SK-N-SH (cell line): ENCODE measurements at regions of chr16 and their contacts with region 1.

Region 1: DNA sequence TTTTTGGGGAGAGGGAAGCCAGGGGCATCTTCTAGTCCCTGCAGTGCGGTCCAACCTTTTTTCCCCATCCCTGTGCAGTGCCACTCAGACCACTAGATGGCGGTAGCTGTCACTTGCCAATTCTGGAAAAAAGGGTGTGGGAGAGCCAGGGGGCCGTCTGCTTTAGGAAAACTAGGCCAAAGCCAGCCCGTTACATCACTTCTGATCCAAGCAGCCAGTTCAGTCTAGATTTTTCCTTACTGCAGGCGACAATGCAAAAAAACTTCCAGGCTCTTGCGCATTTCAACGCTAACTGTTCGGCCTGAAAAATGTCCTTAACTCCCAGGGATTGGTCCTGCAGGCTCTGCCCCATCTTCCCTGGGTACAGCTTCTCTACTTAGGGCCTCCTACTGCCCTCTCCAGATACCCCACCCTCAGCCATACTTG is 69.2 kb upstream of the CES5A start:
- DNase-seq: peak; percentile 68
- H3K4me3 ChIP-seq: peak overlapping the region in 1 of 2 experiments; percentile 42; a peak in 1 of 4 replicates
- H3K27ac ChIP-seq: no peak overlapping the region
- H3K4me1 ChIP-seq: no peaks in the 10 kb centered on the region; a peak in 1 of 4 replicates
- H3K27me3 ChIP-seq: no peaks in the 10 kb centered on the region
- CTCF ChIP-seq: peak; percentile 93
- EP300 ChIP-seq: no peak
- RAD21 ChIP-seq: peak; percentile 88

Region 2: DNA sequence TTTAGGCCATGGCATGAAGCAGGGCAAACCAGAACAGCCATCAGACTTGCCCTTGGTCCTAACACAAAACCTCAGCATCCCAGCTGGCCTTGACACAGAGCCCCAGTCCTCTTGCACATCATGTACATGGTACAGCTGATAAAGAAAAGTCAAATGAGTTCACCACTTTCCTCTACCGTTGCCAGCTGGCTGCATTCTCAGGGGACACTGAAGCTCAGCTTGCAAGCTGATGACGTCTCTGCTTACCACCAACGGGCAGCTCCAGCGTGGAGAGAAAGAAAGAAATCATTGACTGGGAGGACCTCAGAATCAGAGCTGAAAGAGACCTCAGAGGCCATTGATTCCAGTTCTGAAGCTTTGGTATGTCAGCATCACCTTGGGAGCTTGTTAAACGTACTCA is 11.5 kb after region 1 on chr16:
- CTCF ChIA-PET with region 1: interaction called, 25 read pairs
- POLR2A ChIA-PET with region 1: no interaction called
- DNase-seq: no peak
- H3K4me3 ChIP-seq: no peak overlapping the region
- H3K27ac ChIP-seq: no peak overlapping the region
- H3K4me1 ChIP-seq: no peaks in the 10 kb centered on the region
- H3K27me3 ChIP-seq: no peaks in the 10 kb centered on the region
- CTCF ChIP-seq: no peak
- EP300 ChIP-seq: no peak
- RAD21 ChIP-seq: no peak

Region 3: GRCh38 chr16:55976815-55977214 is 32.4 kb after region 1 on chr16:
- CTCF ChIA-PET with region 1: interaction called, 30 read pairs
- POLR2A ChIA-PET with region 1: no interaction called
- DNase-seq: no peak
- H3K4me3 ChIP-seq: no peak overlapping the region
- H3K27ac ChIP-seq: no peak overlapping the region
- H3K4me1 ChIP-seq: no peaks in the 10 kb centered on the region
- H3K27me3 ChIP-seq: no peaks in the 10 kb centered on the region
- CTCF ChIP-seq: no peak
- EP300 ChIP-seq: no peak
- RAD21 ChIP-seq: no peak